Cardiac septum (tissue), 1 donor: ENCODE measurements at regions of chr9 and their contacts with region 1.

Region 1: GRCh38 chr9:92764988-92765936 is 629 bp upstream of the BICD2 start:
- DNase-seq: peak; percentile 99

Region 2: GRCh38 chr9:92650839-92651621 is 114.2 kb before region 1 on chr9:
- intact Hi-C with region 1: no loop called
- DNase-seq: peak; percentile 71

Region 3: DNA sequence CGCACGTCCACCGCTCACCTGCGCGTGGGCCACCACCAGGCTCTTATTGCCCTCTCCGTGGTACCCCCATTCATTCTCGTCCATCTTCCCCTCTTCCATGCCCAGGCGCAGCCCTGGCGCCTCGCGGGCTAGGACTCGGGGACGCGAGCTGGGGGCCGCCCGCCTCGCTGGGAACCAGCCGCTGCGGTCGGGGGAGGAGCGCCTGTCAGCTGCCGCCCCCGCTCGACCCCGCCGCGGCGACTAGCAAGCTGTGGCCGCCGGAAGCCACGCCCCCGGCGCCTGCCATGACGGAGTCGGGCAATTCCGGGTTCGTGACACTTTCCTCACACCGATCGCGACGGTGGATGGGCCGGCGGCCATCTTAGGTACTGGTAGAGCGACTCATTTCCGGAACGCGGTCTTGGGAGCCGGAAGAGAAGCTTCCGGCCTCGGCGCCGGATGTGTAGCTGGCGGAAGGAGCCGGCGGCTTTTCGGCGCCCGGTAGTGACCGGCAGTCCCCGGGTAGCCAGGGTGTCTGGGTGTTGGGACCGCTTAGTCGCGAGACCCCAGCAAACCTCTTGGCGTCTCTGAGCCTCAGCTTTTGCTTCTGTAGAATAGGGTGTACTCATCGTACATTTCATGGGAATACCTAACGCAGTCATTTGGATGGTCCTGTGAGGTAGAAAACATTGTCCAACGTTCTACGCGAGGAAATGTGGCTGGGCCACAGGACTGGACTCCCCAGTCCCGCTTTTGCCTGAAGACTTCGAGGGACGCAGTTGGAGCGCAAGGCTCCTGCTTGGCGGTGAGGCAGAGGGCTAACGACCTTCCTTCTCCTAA is 95.2 kb before region 1 on chr9 and contains the start of gene IPPK:
- intact Hi-C with region 1: loop called (anchors 1 kb)
- DNase-seq: peak; percentile 99
- total RNA-seq, gene IPPK: 13.1 TPM

Region 4: GRCh38 chr9:92850884-92851283 is 85.6 kb after region 1 on chr9:
- intact Hi-C with region 1: no loop called
- DNase-seq: no peak